Activated T-helper 2 cell treated with anti-CD3 and anti-CD28 coated beads, Interferon-gamma antibody, Interleukin-2, Interleukin-4, amounts not matched to agents 10 μg/mL and 5 μg/mL and 100 μg/mL, durations not matched to agents 14 hours and 24 hours and 36 hours (primary cell): ENCODE measurements at regions of chr5 and their contacts with region 1.

Region 1: GRCh38 chr5:71586941-71587765 is at the start of gene MCCC2:
- DNase-seq: peak; percentile 97
- H3K4me3 Mint-ChIP-seq: peak within 1 kb of the TSS; percentile 94
- H3K27ac Mint-ChIP-seq: peak within 1 kb of the TSS; percentile 99
- H3K4me1 Mint-ChIP-seq: peaks cover 32% of the 10 kb centered on the region
- H3K27me3 Mint-ChIP-seq: no peaks in the 10 kb centered on the region
- total RNA-seq, gene MCCC2: 59.7 and 60.0 TPM in 2 replicates

Region 2: DNA sequence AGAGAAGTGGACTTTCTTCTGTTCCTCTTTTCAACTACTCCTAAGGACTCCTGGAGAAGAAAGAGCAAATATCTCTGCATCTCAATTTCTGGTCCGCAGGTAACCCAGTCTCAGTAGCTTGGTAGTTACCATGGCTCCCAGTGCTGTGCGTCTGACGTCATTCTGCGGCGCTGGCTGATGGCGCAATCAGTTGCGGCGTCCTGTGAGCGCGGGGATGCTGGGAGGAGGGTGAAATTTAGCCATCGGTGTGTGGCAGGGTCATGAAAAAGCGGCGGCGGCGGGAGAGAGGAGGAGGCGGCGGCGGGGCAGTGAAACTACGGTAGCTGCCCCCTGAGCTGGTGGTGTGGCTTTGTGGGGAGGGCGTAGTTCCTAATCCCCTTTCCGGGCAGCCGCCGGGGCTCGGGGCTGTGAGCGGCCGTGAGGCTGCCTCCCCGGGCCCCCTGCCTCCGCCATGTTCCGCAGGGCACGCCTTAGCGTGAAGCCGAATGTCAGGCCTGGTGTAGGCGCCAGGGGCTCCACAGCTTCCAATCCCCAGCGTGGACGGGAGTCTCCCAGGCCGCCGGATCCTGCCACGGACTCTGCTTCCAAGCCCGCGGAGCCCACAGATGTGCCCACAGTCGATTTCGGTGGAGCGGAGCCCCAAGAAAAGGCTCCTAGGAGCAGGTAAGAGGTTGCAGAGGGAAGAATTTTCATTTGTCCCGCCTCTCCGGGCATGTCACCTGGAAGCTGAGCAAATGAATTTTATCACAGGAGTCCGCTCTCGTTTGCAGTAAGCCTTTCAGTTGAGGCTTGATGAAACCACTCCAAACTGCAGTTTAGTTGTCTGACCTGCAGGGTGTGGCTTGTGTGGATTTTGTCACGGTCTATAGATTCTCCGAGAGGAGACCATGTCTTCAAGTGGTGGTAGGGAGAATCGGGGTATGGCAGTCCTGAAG is 131.5 kb before region 1 on chr5 and contains the start of gene BDP1:
- intact Hi-C with region 1: loop called (anchors 5 kb)
- DNase-seq: peak; percentile 94
- H3K4me3 Mint-ChIP-seq: peak within 1 kb of the TSS; percentile 89
- H3K27ac Mint-ChIP-seq: peak within 1 kb of the TSS; percentile 97
- H3K4me1 Mint-ChIP-seq: peaks cover 15% of the 10 kb centered on the region
- H3K27me3 Mint-ChIP-seq: no peaks in the 10 kb centered on the region
- total RNA-seq, gene BDP1: 36.1 and 36.9 TPM in 2 replicates

Region 3: GRCh38 chr5:71601222-71602041 is 14.3 kb after region 1 on chr5:
- intact Hi-C with region 1: loop called (anchors 1 kb)
- DNase-seq: peak; percentile 66
- H3K4me3 Mint-ChIP-seq: peak overlapping the region; percentile 52
- H3K27ac Mint-ChIP-seq: peak overlapping the region; percentile 96
- H3K4me1 Mint-ChIP-seq: peaks cover 37% of the 10 kb centered on the region
- H3K27me3 Mint-ChIP-seq: no peaks in the 10 kb centered on the region

Region 4: DNA sequence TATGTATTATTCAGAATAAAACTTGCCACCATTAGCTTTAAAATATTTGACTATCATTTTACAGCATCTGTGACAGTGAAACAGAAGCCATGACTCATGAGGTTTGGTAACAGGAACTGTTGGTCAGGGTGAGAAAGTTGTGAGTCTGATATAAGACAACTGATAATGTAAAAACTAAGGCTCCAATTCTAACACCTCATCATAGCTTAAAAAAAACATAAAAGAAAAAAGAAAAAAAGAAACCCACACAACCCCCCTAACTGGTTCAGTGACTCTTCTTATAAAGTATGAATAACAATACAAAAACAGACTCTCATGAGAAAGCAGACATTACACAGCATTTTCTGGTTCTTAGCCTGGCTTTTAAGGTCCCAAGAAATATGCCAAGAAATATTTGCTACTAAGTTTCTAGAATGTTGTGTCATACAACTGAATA is 647.1 kb after region 1 on chr5:
- intact Hi-C with region 1: loop called (anchors 10 kb)
- DNase-seq: no peak
- H3K4me3 Mint-ChIP-seq: no peak overlapping the region
- H3K27ac Mint-ChIP-seq: no peak overlapping the region
- H3K4me1 Mint-ChIP-seq: peaks cover 42% of the 10 kb centered on the region
- H3K27me3 Mint-ChIP-seq: peaks cover 25% of the 10 kb centered on the region